ENCODE measurements at regions of chr1 and their contacts with region 1.

Region 1: GRCh38 chr1:37807555-37808368 is at the starts of genes C1orf122 and YRDC:
- DNase-seq: peak; percentile 93
- H3K4me3 ChIP-seq: peak within 1 kb of the TSS; percentile 66 to 93 (median 83)
- H3K27ac ChIP-seq: peak within 1 kb of the TSS; percentile 91
- H3K4me1 ChIP-seq: peaks cover 13% of the 10 kb centered on the region
- H3K27me3 ChIP-seq: no peaks in the 10 kb centered on the region
- CTCF ChIP-seq: no peak
- POLR2A ChIP-seq: no peak
- total RNA-seq, gene C1orf122: 32.8 and 36.5 TPM in 2 replicates
- total RNA-seq, gene YRDC: 19.2 and 20.4 TPM in 2 replicates

Region 2: DNA sequence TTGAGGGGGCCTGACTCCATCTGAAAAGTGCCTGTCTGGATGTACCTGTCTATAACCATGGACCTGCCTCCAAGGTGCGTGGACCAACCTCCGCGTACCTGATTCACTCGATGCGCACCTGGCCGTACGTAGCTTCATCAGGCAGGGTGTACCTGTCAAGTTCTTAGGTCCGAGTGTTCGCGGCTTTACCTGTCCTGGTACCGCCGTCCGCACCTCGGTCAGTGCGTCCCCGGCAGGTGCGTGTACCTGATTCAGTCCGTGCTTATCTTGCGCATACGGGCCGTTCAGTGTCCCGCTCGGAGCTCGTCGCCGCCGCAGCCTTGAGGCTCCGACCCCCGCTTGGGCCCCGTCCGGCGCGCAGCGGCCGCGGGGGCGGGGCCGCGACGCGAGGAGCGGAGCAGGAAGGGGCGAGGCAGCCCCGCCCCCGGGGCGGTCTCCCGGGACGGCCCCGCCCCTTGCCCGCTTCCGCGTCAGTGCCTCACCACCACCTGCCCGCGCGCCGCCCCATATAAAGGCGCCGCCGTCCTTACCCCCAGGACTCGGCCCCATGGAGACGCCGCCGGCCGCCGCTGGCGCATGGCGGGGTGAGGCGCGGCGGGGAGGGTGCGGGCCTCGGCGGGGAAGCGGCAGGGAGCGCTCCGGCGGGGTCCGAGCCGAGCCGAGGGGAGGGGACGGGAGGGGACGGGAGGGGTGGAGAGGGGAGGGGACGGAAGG is 333.6 kb before region 1 on chr1 and contains the start of gene ZC3H12A:
- CTCF ChIA-PET with region 1: no interaction called
- POLR2A ChIA-PET with region 1: no interaction called
- dilution Hi-C with region 1: no loop called
- intact Hi-C with region 1: loop called (anchors 5 kb)
- DNase-seq: peak; percentile 84
- H3K4me3 ChIP-seq: peak within 1 kb of the TSS; percentile 47 to 69 (median 55)
- H3K27ac ChIP-seq: peak within 1 kb of the TSS; percentile 65
- H3K4me1 ChIP-seq: peaks cover 72% of the 10 kb centered on the region
- H3K27me3 ChIP-seq: no peaks in the 10 kb centered on the region
- CTCF ChIP-seq: no peak
- POLR2A ChIP-seq: peak; percentile 97
- total RNA-seq, gene ZC3H12A: 6.3 and 7.5 TPM in 2 replicates

Region 3: DNA sequence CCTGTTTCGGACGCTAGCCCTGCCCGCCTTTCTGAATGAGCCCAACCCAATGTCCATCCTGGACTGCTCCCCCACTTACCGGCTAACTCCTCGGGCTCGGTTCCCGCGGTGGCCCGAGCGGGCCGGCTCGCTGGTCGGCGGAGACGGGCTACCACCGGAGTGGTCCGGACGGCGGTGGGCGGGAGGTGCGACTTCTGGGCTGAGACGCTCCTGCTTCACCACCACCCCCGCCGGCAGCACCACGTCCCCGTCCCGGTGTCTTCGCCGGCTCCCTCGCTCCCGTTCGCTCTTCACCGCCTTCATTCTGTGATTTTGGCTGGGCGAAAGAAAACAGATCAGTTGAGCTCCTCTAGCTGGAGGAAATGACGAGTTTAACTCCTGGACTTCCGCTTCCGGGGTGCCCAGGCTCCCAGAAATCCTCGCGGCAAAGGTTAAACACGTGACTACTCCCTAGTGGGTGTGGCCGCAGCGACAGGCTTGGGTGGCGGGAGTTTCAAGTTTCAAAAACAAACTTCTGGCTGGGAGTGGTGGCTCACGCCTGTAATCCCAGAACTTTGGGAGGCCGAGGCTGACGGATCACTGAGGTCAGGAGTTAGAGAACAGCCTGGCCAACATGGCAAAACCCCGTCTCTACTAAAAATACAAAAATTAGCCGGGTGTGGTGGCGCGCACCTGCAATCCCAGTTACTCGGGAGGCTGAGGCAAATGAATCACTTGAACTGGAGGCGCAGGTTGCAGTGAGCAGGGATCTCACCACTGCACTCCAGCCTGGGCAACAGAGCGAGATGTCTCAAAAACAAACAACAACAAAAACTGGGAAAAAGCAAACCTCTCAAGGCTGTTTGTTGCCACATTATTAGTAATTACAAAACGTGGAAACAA is 253.6 kb before region 1 on chr1 and contains the start of gene SNIP1:
- CTCF ChIA-PET with region 1: no interaction called
- POLR2A ChIA-PET with region 1: no interaction called
- dilution Hi-C with region 1: no loop called
- intact Hi-C with region 1: loop called (anchors 2 kb)
- DNase-seq: peak; percentile 93
- H3K4me3 ChIP-seq: peak within 1 kb of the TSS; percentile 88 to 94 (median 88)
- H3K27ac ChIP-seq: peak within 1 kb of the TSS; percentile 76
- H3K4me1 ChIP-seq: peaks cover 14% of the 10 kb centered on the region
- H3K27me3 ChIP-seq: no peaks in the 10 kb centered on the region
- CTCF ChIP-seq: no peak
- POLR2A ChIP-seq: peak; percentile 56
- total RNA-seq, gene SNIP1: 18.4 and 19.6 TPM in 2 replicates

Region 4: GRCh38 chr1:37836788-37837187 is 29.0 kb after region 1 on chr1:
- CTCF ChIA-PET with region 1: no interaction called
- POLR2A ChIA-PET with region 1: no interaction called
- dilution Hi-C with region 1: no loop called
- intact Hi-C with region 1: no loop called
- DNase-seq: no peak
- H3K4me3 ChIP-seq: no peak overlapping the region
- H3K27ac ChIP-seq: no peak overlapping the region
- H3K4me1 ChIP-seq: no peaks in the 10 kb centered on the region
- H3K27me3 ChIP-seq: no peaks in the 10 kb centered on the region
- CTCF ChIP-seq: no peak
- POLR2A ChIP-seq: no peak

Region 5: DNA sequence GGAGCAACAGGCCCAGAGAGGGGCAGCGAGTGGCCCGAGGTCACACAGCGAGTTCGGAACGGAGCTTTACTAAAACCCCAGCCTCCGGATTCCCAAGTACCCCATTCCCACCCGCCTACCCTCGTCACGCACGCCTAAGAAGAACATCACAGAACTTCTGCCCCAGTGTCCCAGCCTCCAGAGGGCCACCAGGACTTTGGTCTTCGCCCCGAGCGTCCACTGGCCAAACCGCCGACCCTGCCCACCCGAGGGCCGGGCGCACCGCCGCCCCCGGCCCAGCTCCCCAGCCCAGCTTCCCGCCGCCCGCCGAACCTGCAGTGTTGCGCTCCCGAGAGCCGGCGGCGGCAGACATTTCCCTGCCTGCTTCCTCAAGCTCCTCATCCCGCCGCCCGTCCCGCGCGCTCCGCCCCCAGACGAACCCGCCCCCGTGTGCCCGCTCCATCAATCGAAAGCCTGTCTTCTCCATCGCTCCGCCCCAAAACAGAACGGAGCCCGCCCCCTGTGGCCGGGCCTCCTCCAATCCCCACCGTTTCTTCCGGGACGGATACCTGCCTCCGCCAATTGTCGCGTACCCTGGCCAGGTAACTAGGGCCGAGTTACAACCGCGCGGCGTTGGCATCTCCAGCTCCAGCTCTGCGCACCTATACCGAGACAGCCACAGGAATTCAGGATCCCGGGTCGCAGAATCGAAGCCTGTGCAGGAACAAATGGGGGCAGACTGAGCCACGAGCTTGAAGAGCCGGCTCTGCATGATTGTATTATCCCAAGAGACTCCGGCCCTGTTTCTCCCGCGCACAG is 123.8 kb after region 1 on chr1:
- CTCF ChIA-PET with region 1: no interaction called
- POLR2A ChIA-PET with region 1: no interaction called
- dilution Hi-C with region 1: no loop called
- intact Hi-C with region 1: loop called (anchors 5 kb)
- DNase-seq: peak; percentile 98
- H3K4me3 ChIP-seq: peak overlapping the region; percentile 72 to 78 (median 74)
- H3K27ac ChIP-seq: peak overlapping the region; percentile 29
- H3K4me1 ChIP-seq: peaks cover 10% of the 10 kb centered on the region
- H3K27me3 ChIP-seq: no peaks in the 10 kb centered on the region
- CTCF ChIP-seq: no peak
- POLR2A ChIP-seq: no peak

Region 6: DNA sequence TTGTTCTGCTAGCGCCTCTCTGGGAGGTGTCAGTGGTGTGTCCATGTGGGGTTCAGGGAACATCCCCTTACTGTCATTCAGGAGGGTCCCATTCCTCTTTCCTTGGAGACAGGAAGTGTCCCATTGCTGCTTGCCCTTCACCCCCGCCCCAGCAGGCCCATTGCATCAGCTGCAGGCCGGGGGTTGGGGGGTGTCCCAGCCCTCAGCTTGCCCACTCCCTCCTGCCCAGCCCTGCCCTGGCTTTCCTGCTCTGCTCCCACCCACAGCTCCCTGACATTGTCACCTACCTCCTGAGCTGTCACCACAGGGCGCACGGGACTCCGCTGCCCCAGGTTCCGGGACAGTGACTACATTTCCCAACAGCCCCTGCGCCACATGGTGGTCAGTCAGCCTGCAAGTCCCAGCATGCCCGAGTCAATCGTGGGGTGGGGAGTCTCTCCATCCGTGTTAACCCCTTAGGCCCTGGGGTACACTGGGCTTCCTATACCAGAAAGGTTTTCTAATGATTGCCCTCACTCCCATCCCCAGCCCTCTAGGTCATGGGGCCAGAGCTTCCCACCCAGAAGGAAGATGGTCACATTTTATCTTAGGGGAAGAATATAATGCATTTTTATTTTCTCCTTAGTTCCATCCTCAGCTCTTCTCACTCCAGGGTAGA is 139.1 kb after region 1 on chr1 and contains the start of gene INPP5B:
- CTCF ChIA-PET with region 1: no interaction called
- POLR2A ChIA-PET with region 1: no interaction called
- dilution Hi-C with region 1: no loop called
- intact Hi-C with region 1: loop called (anchors 1 kb)
- DNase-seq: peak; percentile 83
- H3K4me3 ChIP-seq: peak within 1 kb of the TSS; percentile 42 to 52 (median 49)
- H3K27ac ChIP-seq: peak within 1 kb of the TSS; percentile 93
- H3K4me1 ChIP-seq: peaks cover 12% of the 10 kb centered on the region
- H3K27me3 ChIP-seq: no peaks in the 10 kb centered on the region
- CTCF ChIP-seq: no peak
- POLR2A ChIP-seq: peak; percentile 13
- total RNA-seq, gene INPP5B: 13.5 and 14.7 TPM in 2 replicates

Region 7: DNA sequence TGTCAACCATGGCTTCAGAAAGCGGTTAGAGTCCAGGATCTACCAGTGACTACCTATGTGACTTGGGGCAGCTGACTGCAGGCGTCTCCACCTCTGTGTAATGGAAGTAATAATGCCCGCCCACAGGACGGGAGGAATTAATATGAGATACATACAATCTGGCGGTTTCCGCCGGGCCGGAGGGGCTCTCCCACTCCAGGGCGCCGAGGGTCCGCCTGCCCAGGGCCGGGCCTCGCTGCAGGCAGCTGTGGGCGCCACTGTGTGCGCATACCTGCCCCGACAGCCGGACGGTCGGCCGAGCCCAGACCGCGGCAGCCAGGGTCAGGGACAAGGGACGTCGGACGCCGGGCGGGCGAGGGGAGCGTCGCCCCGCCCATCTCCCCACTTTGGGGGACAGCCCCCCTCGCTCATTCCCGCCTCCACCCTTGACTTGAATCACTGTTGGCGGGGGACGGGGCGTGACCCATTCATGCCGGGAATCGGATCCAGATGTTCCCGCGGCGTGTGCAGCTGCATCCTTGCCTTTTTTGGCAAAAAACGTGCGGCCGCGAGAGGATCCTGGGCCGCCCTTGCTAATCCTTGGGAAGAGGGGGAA is 188.1 kb after region 1 on chr1:
- CTCF ChIA-PET with region 1: no interaction called
- POLR2A ChIA-PET with region 1: no interaction called
- dilution Hi-C with region 1: no loop called
- intact Hi-C with region 1: loop called (anchors 5 kb)
- DNase-seq: no peak
- H3K4me3 ChIP-seq: peak overlapping the region in 1 of 3 experiments; percentile 20
- H3K27ac ChIP-seq: peak overlapping the region; percentile 46
- H3K4me1 ChIP-seq: peaks cover 44% of the 10 kb centered on the region
- H3K27me3 ChIP-seq: no peaks in the 10 kb centered on the region
- CTCF ChIP-seq: no peak
- POLR2A ChIP-seq: no peak

Measured in endothelial cell of umbilical vein (primary cell).